CD4-positive, alpha-beta T cell (primary cell): ENCODE measurements at regions of chr19 and their contacts with region 1.

Region 1: DNA sequence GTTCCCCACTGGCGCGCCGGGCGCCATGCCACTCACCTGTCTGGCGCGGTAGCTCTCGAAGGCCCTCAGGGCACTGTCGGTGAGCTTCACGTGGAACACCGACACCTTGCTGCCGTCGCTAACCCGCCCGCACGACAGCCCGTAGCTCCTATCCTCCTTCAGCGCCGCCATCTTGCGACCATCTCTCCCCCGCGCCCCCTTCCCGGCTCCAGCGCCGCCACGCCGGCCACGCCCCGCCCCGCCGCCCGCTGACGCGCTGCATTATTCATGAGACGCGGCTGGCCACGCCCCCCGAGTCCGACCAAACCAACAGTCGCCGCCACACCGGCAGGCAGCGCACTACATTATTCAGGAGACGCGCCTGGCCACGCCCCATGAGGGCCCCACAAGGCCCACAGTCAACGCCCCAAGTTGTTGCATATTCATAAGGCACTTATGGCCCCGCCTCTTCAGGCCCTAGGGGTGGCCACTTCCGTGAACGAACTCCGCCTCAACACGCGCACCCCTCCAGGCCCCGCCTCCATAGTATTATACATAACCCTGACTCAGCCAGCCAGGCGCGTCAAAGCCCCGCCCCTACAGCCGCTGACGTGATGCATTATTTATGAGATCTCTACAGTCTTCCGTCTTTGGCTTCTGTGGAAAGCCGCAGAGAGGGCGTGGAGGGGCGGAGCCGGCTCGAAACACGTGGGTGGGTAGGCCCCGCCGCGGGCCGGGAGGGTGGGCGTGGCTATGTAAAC is at the start of gene ELL:
- DNase-seq: peak; percentile 100
- ATAC-seq: peak; percentile 87
- H3K4me3 ChIP-seq: peak within 1 kb of the TSS; percentile 79
- H3K4me3 Mint-ChIP-seq: peak within 1 kb of the TSS; percentile 97
- H3K27ac ChIP-seq: peak within 1 kb of the TSS; percentile 90 to 95
- H3K27ac Mint-ChIP-seq: peak within 1 kb of the TSS; percentile 86
- H3K4me1 ChIP-seq: peaks cover 46% of the 10 kb centered on the region
- H3K4me1 Mint-ChIP-seq: peaks cover 13% of the 10 kb centered on the region
- H3K27me3 ChIP-seq: no peaks in the 10 kb centered on the region
- H3K27me3 Mint-ChIP-seq: no peaks in the 10 kb centered on the region
- CTCF ChIP-seq: no peak
- total RNA-seq, gene ELL: 46.2 to 46.8 TPM

Region 2: DNA sequence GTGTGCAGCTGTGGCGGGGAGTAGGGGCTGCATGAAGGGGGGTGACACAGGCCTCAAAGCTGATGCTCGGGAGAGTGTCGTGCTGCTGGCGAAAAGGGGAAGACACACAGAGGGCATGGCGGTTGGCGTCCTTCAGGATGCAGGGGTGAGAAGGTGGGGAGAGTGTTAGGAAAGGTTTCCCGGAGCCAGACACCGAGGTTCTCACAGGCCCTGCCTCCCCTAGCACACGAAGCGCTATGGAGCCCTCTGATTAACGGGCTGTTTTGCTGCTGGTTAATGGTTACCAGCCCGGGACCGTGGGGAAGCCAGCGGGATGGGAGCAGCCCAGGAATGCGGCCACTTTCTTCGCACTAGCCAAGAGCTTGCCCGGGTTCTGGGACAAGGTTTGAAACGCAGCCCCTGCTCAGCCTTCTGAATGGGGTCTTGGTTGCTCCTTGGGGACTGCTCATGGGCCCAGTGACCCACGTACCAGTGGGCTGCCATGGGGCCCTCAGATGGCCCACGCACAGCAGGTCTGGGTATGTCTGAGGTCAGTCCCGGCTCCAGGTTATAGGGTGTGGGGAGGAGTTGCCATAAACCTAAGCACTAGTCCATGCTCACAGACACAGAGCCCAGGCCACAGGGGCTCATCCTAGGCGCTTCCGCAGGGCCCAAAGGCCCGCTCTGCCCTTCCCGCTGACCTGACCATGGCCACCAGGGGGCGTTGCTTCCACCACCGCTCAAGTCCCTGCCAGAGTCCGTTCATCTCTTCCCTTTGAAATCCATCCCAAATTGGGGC is 52.8 kb before region 1 on chr19:
- CTCF ChIA-PET with region 1: interaction called, 13 read pairs
- POLR2A ChIA-PET with region 1: no interaction called
- intact Hi-C with region 1: loop called in 1 of 2 experiments (anchors 5 kb)
- DNase-seq: peak; percentile 42 to 82 (median 56)
- ATAC-seq: peak; percentile 68
- H3K4me3 ChIP-seq: no peak overlapping the region
- H3K4me3 Mint-ChIP-seq: no peak overlapping the region
- H3K27ac ChIP-seq: no peak overlapping the region
- H3K27ac Mint-ChIP-seq: no peak overlapping the region
- H3K4me1 ChIP-seq: peaks cover 53% of the 10 kb centered on the region
- H3K4me1 Mint-ChIP-seq: peaks cover 10% of the 10 kb centered on the region
- H3K27me3 ChIP-seq: no peaks in the 10 kb centered on the region
- H3K27me3 Mint-ChIP-seq: no peaks in the 10 kb centered on the region
- CTCF ChIP-seq: peak; percentile 63

Region 3: DNA sequence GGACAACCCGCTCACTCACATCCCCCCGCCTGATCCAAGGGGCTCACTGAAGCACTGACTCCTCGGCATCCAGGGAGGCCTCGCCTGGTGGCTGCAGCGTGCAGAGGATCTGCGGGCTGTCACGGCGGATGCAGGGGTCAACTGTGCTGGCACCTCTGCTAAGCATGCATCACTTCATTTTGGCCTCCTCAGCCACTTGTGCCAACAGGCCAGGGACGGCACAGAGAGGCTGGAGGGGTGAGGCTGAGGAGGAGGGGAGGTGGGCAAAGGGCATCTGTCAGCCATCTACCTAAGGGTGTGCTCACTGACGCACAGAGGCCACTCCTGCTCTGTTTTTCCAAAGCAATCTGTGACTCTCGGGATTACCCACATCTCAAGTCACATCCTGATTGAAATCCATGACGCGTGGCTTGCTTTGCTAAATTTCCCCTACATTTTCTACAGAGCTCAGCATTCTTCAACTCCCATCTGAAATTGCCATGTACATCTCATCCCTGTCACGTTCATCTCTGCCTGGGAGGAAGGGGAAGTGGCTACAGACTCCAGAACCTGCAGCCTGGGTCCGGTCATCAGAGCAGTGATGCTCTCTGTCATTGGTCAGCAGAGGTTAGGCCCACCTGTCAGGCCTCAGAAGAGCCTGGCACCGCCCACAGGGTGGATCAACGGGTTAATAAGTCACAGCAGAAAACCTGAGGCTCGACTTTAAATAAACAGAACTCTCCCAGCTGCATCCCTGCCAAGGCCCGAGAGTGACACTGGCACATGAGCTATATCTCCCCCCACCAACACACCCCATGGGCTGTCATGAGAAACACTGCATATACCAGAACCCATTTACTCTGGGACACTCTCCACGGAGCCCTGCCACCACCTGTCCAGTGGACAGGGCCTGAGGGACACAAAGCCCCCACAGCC is 17.8 kb before region 1 on chr19:
- CTCF ChIA-PET with region 1: interaction called, 10 read pairs
- POLR2A ChIA-PET with region 1: interaction called, 29 read pairs
- intact Hi-C with region 1: no loop called
- DNase-seq: no peak
- ATAC-seq: no peak
- H3K4me3 ChIP-seq: no peak overlapping the region
- H3K4me3 Mint-ChIP-seq: no peak overlapping the region
- H3K27ac ChIP-seq: peak overlapping the region in 1 of 2 donors; percentile 30
- H3K27ac Mint-ChIP-seq: peak overlapping the region; percentile 89
- H3K4me1 ChIP-seq: peaks cover 100% of the 10 kb centered on the region
- H3K4me1 Mint-ChIP-seq: peaks cover 82% of the 10 kb centered on the region
- H3K27me3 ChIP-seq: no peaks in the 10 kb centered on the region
- H3K27me3 Mint-ChIP-seq: no peaks in the 10 kb centered on the region
- CTCF ChIP-seq: no peak

Region 4: DNA sequence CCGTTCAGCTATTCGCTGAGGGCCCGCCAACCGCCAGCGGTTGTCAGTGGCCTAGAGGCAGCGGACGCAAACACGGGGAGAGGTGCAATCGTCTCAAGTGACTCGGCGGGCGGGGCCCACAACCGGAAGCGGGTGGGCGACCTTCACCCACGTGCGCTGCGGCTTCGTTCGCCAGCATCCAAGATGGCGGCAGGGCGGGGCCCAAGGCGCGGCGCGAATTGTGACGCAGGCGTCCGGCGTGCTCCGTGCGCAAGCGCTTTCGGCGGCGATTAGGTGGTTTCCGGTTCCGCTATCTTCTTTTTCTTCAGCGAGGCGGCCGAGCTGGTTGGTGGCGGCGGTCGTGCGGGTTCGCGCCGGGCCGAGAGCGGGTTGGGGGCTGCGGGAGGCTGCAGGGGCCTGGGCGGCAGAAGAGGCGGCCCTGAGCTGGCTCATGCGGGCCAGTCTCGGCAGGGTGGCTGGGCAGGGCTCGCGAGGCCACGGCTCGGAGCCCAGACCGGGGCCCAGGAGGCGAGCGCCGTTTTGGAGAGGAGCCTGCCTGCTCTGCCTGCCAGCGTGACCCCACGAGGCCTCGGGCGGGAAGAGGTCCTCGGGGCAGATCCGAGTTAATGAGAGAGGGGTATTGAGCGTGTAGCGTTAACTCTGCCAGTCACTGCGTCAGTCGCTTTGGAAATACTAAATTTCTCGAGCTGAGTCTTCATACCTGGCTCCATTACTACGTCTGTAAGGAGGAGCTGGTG is 49.7 kb after region 1 on chr19 and contains the start of gene UBA52:
- CTCF ChIA-PET with region 1: interaction called, 9 read pairs
- POLR2A ChIA-PET with region 1: interaction called, 47 read pairs
- intact Hi-C with region 1: loop called (anchors 1 kb)
- DNase-seq: peak; percentile 96 to 100 (median 98)
- ATAC-seq: peak; percentile 91
- H3K4me3 ChIP-seq: peak within 1 kb of the TSS; percentile 97
- H3K4me3 Mint-ChIP-seq: peak within 1 kb of the TSS; percentile 91
- H3K27ac ChIP-seq: peak within 1 kb of the TSS; percentile 89 to 94
- H3K27ac Mint-ChIP-seq: peak within 1 kb of the TSS; percentile 93
- H3K4me1 ChIP-seq: peaks cover 28% of the 10 kb centered on the region
- H3K4me1 Mint-ChIP-seq: peaks cover 20% of the 10 kb centered on the region
- H3K27me3 ChIP-seq: no peaks in the 10 kb centered on the region
- H3K27me3 Mint-ChIP-seq: no peaks in the 10 kb centered on the region
- CTCF ChIP-seq: no peak
- total RNA-seq, gene UBA52: 2,255 to 2,378 TPM

Region 5: DNA sequence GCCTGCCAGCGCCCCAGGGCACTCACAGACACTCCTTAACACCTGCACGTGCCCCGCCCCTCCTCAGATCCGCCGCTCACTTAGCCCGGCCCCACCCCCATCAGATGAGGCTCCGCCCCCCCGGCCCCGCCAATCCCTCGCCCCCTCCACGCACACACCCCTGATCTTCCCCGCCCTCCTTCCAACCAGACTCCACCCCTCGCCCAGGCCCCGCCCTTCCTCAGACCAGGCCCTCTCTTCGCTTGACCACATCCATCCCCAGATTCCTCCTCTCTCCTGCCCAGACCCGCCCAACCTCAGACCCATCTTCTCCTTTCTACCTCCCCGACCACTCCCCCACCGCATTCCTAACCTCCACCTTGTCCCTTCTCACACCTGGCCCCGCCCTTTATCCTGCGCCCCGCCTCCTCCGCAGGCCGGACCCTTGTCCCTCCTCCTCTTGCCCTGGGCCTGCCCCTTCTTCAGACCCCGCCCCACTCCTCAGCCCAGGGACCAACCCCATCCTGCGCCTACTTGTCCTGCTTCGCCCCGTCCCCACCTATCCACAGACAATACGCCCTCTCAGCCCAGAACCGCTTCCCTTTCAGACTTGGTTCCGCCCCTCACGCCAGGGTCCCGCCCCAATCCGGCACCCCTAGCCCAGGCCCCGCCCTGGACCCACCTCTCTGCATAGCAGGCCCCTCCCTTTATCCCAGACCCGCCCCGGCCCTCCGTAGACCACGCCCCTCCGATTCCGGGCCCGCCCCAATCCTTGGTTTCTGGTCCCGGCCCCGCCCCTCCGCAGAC is 114.3 kb after region 1 on chr19:
- CTCF ChIA-PET with region 1: interaction called, 3 read pairs
- POLR2A ChIA-PET with region 1: no interaction called
- intact Hi-C with region 1: loop called in 1 of 2 experiments (anchors 1 kb)
- DNase-seq: peak; percentile 98 to 100 (median 99)
- ATAC-seq: peak; percentile 86
- H3K4me3 ChIP-seq: peak overlapping the region; percentile 81
- H3K4me3 Mint-ChIP-seq: peak overlapping the region; percentile 91
- H3K27ac ChIP-seq: peak overlapping the region; percentile 39 to 72
- H3K27ac Mint-ChIP-seq: peak overlapping the region; percentile 83
- H3K4me1 ChIP-seq: peaks cover 34% of the 10 kb centered on the region
- H3K4me1 Mint-ChIP-seq: peaks cover 35% of the 10 kb centered on the region
- H3K27me3 ChIP-seq: no peaks in the 10 kb centered on the region
- H3K27me3 Mint-ChIP-seq: no peaks in the 10 kb centered on the region
- CTCF ChIP-seq: no peak

Region 6: DNA sequence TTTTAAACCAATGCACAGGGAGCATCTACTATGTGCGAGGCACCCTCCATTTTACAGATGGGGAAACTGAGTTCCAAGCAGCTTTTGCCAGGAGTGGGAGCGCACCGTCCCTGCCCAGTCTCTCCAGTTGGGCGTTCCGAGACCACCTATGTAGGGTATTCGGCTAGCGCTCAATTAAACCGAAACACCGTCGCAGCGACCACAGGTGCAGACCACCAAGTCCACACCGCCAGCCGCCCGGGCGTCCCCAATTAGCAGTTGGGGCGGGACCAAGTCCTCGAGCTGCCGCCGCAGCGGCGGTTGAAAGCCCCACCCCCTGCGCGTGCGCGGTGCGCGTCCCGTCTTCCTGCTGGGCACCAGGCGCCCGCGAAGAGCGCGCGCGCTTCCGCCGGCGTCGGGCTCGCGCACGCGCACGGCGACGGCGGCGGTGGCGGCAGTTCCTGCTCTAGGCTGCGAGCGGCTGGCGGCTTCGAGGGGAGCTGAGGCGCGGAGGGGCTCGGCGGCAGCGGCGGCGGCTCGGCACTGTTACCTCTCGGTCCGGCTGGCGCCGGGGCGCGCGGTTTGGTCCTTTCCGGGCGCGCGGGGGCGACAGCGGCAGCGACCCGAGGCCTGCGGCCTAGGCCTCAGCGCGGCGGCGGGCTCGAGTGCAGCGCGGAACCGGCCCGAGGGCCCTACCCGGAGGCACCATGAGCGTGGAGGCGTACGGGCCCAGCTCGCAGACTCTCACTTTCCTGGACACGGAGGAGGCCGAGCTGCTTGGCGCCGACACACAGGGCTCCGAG is 309.7 kb after region 1 on chr19 and contains the start of gene UPF1:
- CTCF ChIA-PET with region 1: interaction called, 3 read pairs
- POLR2A ChIA-PET with region 1: interaction called, 6 read pairs
- intact Hi-C with region 1: loop called in 1 of 2 experiments (anchors 5 kb)
- DNase-seq: peak; percentile 90 to 99 (median 96)
- ATAC-seq: peak; percentile 75
- H3K4me3 ChIP-seq: peak within 1 kb of the TSS; percentile 64
- H3K4me3 Mint-ChIP-seq: peak within 1 kb of the TSS; percentile 89
- H3K27ac ChIP-seq: peak within 1 kb of the TSS; percentile 64 to 81
- H3K27ac Mint-ChIP-seq: peak within 1 kb of the TSS; percentile 88
- H3K4me1 ChIP-seq: peaks cover 45% of the 10 kb centered on the region
- H3K4me1 Mint-ChIP-seq: peaks cover 39% of the 10 kb centered on the region
- H3K27me3 ChIP-seq: no peaks in the 10 kb centered on the region
- H3K27me3 Mint-ChIP-seq: no peaks in the 10 kb centered on the region
- CTCF ChIP-seq: no peak
- total RNA-seq, gene UPF1: 146 to 150 TPM